CD14-positive monocyte (primary cell): ENCODE measurements at regions of chr17 and their contacts with region 1.

Region 1: DNA sequence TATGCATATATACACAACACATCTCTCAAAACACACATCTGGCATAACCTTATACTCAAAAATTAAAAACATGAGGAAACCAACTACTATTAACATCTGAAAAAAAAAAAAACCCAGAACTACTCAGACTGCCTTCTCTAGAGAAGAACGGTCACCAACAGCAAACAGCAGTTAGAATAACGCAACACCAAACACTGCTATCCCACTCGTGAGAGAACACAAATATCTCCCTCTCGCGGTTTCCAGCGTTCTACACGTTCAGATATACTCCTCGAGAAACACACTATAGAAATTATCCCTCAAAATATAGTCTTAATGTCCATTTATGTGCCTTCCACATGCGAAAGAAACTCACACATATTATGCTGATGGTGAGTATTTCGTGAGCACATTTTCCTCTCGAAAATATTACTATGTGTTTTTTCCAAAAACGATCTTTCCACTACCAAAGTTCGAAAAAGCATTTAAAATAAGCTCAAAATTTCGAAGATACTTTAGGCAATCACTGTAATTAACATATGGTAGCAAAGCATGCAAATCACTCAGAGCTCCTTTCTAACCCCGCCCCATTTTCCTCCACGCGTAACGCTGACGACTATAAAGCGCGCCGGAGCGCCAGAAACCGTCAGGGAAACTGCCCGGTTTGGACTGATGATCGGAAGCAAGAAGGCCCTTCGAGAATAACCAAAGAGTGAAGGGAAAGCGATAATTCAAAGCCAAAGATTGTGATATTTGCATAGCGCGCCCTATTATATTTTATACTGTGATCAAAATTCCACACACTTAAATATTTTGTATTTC is 60.1 kb downstream of the TEX14 start:
- DNase-seq: peak; percentile 96 to 97 (median 96)
- H3K4me3 ChIP-seq: peak overlapping the region; percentile 53 to 74 (median 74)
- H3K4me3 Mint-ChIP-seq: no peak overlapping the region
- H3K27ac ChIP-seq: peak overlapping the region; percentile 90 to 98
- H3K27ac Mint-ChIP-seq: no peak overlapping the region
- H3K4me1 ChIP-seq: peaks cover 14 to 18% of the 10 kb centered on the region in 2 donors
- H3K4me1 Mint-ChIP-seq: peaks cover 15% of the 10 kb centered on the region
- H3K27me3 ChIP-seq: no peaks in the 10 kb centered on the region
- H3K27me3 Mint-ChIP-seq: peaks cover 1 to 7% (median 2%) of the 10 kb centered on the region in 3 donors
- CTCF ChIP-seq: peak; percentile 25

Region 2: GRCh38 chr17:58658804-58659713 is 27.3 kb after region 1 on chr17:
- intact Hi-C with region 1: loop called (anchors 1 to 2 kb)
- DNase-seq: peak; percentile 89 to 95 (median 93)
- H3K4me3 ChIP-seq: peak overlapping the region; percentile 39 to 76 (median 73)
- H3K4me3 Mint-ChIP-seq: peak overlapping the region; percentile 70 to 86
- H3K27ac ChIP-seq: peak overlapping the region; percentile 42 to 87
- H3K27ac Mint-ChIP-seq: peak overlapping the region; percentile 96 to 100 (median 99)
- H3K4me1 ChIP-seq: peaks cover 15 to 17% of the 10 kb centered on the region in 2 donors
- H3K4me1 Mint-ChIP-seq: peaks cover 19% of the 10 kb centered on the region
- H3K27me3 ChIP-seq: no peaks in the 10 kb centered on the region
- H3K27me3 Mint-ChIP-seq: peaks cover 4 to 11% (median 6%) of the 10 kb centered on the region in 3 donors
- CTCF ChIP-seq: no peak